ENCODE measurements at regions of chr17 and their contacts with region 1.

Region 1: DNA sequence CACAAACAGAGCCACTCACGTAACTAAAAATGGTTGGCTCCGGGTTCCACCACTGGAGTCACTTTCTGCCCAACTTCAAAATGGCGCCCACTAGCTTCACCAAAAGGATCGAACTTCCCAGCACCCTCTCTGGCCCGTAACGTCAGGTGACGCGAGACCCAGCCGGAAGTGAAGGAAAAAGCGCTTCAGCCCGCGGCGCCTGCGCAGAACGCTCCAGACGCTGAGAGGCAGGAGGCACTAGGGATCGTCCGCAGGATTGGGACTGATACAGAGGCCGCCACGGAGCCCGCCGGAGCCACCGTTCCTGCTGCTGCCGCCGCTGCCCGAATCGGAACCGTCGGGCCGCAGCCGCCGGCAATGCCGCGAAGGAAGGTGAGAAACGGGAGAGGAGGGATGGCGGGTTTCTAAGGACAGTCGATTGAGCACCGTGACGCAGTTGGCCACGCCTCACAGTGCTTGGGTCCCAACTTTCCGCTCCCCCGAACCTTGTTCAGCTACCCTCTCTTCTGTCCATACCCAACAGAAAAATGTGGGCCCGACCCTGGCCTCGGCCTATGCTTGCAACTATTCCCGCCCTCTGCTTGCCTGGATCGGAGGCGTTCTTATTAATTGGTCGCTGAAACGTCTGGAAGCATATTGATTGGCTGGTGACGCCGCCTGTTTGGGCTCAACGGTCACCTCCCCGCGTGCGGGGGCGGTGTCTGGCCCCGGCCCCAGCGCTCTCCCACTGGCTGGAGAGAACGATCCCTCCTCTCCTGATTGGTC is at the start of gene KAT7:
- DNase-seq: peak; percentile 99
- ATAC-seq: peak; percentile 97
- total RNA-seq, gene KAT7: 45.4 TPM

Region 2: DNA sequence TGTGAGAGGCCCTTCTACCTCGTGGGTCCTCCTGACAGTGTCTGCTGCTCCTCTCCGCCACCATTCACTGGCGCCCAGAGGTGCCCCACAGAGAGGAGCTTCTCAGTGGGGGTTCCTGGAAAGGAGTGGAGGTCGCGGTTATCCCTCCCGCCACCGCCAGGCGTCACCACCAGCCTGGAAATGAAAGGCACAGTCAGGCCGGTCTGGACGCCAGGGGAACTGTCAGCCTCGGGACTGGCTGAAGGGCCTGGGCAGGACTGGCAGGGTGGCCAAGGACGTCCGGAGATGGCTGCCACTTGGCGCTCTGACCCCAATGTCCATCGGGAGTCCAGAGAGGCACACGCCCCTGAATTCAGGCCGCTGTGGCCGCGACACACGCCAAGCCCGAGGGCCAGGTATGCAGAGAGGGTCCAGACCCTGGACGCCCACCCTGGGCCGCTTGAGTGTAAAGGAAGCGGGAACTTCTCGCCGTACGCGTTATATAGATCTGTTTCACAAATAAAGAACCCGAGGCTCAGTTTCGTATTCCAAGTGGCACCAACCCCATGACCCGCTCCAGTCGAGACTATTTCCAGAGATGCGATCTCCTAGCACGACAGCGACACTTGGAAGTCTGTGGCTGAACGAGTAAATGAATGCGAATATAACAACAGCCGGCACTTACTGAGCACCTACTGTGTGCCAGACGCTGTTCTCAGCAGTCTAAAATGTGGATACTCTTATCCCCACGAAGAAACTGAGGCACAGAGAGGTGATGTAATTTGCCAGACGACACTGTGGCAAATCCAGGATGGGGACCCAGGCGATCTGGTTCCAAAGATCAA is 220.6 kb before region 1 on chr17:
- intact Hi-C with region 1: loop called (anchors 2 kb)
- DNase-seq: peak; percentile 94
- ATAC-seq: peak; percentile 75

Region 3: GRCh38 chr17:49836111-49837030 is 47.7 kb after region 1 on chr17:
- intact Hi-C with region 1: no loop called
- DNase-seq: no peak
- ATAC-seq: no peak

Region 4: GRCh38 chr17:49851387-49852291 is 63.0 kb after region 1 on chr17:
- intact Hi-C with region 1: loop called (anchors 2 kb)
- DNase-seq: peak; percentile 87
- ATAC-seq: peak; percentile 80

Region 5: DNA sequence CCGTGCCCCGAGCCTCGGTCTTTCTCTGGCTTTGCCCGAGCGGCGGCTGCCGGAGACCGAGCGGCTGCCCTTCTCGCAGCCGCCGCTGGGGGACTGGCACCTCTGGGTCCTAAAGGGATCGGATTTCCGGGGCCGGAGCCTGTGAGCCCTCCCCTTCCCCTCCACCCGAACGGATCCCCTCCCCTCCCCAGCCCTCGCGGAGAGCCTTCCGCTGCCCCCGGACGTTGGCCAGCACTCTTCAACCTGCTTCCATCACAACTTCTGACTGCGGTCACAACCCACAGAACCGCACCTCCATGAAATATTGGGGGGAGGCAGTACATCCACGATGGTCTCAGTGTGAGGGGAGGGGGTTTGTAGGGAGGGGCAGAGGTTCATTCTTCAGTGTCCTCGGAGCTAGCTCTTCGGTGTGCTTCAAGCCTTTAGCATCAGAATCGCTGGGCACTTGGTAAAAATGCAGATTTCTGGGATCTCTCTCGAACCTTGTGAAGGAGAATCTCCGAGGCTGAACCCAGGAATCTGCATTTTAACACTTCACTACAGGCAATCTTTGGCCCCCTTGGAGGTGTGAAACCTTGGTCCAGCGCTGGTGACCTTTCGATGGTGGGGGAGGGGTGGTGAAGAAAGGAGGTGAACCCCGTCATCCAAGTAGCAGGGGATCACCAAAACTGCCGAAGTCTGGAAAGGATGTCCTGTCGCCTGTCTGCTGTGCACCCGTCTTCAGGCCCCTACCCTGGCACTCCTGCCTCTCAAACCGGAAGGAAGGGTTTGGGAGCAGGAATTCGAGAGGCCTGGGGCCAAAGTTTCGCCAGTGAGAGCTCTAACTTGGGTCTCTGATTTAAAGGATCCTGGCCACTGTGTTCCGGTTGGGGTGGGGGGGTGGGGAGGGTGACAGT is 362.6 kb after region 1 on chr17:
- intact Hi-C with region 1: loop called (anchors 5 kb)
- DNase-seq: peak; percentile 95
- ATAC-seq: peak; percentile 75

Measured in Right ventricle myocardium inferior (tissue), 1 donor.